H1 (cell line): ENCODE measurements at regions of chr2 and their contacts with region 1.

Region 1: DNA sequence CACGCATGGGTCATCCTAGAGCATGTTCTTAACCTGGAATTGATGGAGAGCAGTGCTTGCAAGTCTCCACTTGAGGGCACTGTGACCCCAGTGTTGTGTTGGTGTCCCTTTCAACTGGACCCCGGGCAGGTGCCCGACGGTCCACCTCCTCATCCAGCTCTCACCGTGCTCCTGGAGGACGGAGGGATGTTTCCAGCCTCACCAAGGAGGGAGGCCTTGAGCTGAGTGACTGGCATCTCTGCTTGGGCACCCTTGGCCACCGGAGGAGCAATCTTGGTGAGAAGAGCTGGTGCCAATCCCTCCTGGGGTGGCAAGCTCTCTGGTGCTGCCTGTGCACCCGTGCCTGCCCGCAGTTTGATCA is 45.4 kb upstream of the ASB18 start:
- DNase-seq: peak; percentile 13 to 77
- H3K4me3 ChIP-seq: no peak overlapping the region
- H3K27ac ChIP-seq: no peak overlapping the region
- H3K4me1 ChIP-seq: peaks cover 3 to 12% (median 9%) of the 10 kb centered on the region in 4 experiments; a peak in 5 of 7 replicates
- H3K27me3 ChIP-seq: no peaks in the 10 kb centered on the region
- CTCF ChIP-seq: peak; percentile 80 to 83 (median 82)
- EP300 ChIP-seq: no peak
- POLR2A ChIP-seq: no peak
- RAD21 ChIP-seq: peak; percentile 93 to 97

Region 2: GRCh38 chr2:236298924-236299475 is 10.6 kb before region 1 on chr2:
- CTCF ChIA-PET with region 1: interaction called, 15 read pairs
- POLR2A ChIA-PET with region 1: no interaction called
- DNase-seq: peak in 1 of 2 experiments; percentile 30
- H3K4me3 ChIP-seq: no peak overlapping the region
- H3K27ac ChIP-seq: no peak overlapping the region
- H3K4me1 ChIP-seq: no peaks in the 10 kb centered on the region
- H3K27me3 ChIP-seq: no peaks in the 10 kb centered on the region
- CTCF ChIP-seq: no peak
- EP300 ChIP-seq: no peak
- POLR2A ChIP-seq: no peak
- RAD21 ChIP-seq: no peak

Region 3: GRCh38 chr2:236343400-236344161 is 33.9 kb after region 1 on chr2:
- CTCF ChIA-PET with region 1: interaction called, 27 read pairs
- POLR2A ChIA-PET with region 1: no interaction called
- DNase-seq: peak; percentile 49 to 50
- H3K4me3 ChIP-seq: no peak overlapping the region
- H3K27ac ChIP-seq: no peak overlapping the region
- H3K4me1 ChIP-seq: peaks cover 0 to 8% (median 5%) of the 10 kb centered on the region in 4 experiments; a peak in 3 of 7 replicates
- H3K27me3 ChIP-seq: no peaks in the 10 kb centered on the region
- CTCF ChIP-seq: peak in 2 of 3 experiments; percentile 63 to 82; a peak in 3 of 4 replicates
- EP300 ChIP-seq: no peak
- POLR2A ChIP-seq: no peak
- RAD21 ChIP-seq: peak; percentile 68 to 73

Region 4: DNA sequence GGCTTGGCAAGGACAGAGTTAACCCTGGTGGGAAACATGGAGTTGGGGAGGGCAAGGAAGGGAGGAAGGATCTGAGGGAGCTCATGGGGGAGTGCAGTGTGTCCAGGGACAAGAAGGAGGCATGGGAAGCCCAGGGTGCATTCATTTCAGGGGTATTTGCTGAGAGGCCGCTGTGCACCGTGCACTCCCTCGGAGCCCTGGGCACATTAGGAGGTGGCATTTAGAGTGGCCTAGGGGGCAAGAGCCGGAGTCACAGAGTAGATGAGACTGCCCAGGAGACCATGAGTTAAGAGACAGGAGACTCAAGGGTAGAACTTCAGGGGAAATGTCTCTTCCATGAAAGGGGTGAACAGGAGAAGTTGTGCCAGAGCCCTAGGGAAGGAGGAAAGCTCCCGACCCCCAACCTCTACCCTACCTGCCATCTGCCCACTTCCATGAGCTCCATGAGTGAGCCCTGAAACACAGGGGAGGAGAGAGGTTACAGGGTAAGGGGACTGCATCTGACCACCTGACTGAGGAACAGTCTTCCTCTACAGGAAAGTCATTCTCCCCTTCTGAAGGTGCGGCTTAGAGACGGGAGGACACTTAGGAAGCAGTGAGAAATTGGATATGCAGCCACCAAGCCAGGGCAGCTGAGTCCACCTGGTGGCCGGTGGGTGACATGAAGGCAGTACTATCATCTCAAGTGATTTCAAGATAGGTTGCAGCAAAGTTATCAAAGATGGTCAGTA is 717.5 kb after region 1 on chr2:
- CTCF ChIA-PET with region 1: interaction called, 15 read pairs
- POLR2A ChIA-PET with region 1: no interaction called
- DNase-seq: peak; percentile 29 to 74
- H3K4me3 ChIP-seq: no peak overlapping the region
- H3K27ac ChIP-seq: no peak overlapping the region
- H3K4me1 ChIP-seq: no peaks in the 10 kb centered on the region
- H3K27me3 ChIP-seq: no peaks in the 10 kb centered on the region; a peak in 2 of 7 replicates
- CTCF ChIP-seq: peak; percentile 82 to 97 (median 82)
- EP300 ChIP-seq: no peak
- POLR2A ChIP-seq: no peak
- RAD21 ChIP-seq: peak; percentile 99 to 100